ENCODE measurements at regions of chr1 and their contacts with region 1.

Region 1: GRCh38 chr1:34865981-34866761 is 6.6 kb upstream of the SMIM12 start:
- DNase-seq: peak; percentile 77 to 88
- H3K4me3 ChIP-seq: peak overlapping the region; percentile 75 to 87
- H3K27ac ChIP-seq: peak overlapping the region; percentile 70 to 74
- H3K4me1 ChIP-seq: peaks cover 0 to 15% (median 10%) of the 10 kb centered on the region in 4 donors
- H3K27me3 ChIP-seq: peaks cover 0 to under 1% of the 10 kb centered on the region in 2 donors
- CTCF ChIP-seq: peak; percentile 91 to 95

Region 2: DNA sequence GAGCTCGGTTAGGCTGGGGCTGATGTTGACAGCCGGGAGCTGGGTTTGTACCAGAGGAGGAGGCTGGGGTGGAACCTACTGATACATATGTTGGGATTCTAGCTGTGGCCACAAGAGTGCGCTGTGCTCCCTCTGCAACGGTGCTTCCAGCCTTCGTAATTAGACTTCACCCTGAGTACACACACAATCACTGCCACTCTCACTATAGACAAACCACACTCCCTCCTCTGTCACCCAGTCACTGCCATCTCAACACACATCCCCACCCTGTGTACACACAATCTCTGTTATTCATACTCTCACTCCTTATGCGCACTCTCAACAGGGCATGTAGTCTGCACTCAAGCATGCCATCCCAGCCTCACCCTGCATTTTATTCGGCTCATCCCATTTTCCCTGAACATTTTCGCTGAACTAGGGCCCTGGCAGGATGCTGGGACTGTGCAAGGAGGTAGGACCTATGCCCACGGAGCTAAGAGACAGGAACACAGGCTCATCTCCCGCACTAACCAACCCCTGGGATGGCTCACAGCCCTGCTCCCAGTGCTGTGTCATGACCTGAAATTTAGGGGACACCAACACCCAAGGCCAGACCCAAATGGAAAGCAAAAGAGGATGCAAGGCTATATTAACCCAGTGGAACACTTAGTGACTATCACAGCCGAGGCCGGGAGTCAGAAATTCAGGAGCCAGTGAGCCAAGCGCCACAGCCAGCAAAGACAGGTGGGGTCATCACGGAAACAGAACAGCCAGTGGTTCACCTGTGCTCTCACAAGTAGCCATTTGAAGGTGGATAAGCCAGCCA is 79.4 kb before region 1 on chr1:
- intact Hi-C with region 1: loop called (anchors 5 kb)
- DNase-seq: peak; percentile 66 to 86
- H3K4me3 ChIP-seq: no peak overlapping the region
- H3K27ac ChIP-seq: peak overlapping the region; percentile 59 to 93
- H3K4me1 ChIP-seq: peaks cover 0 to 59% (median 41%) of the 10 kb centered on the region in 4 donors
- H3K27me3 ChIP-seq: peaks cover 5 to 14% of the 10 kb centered on the region in 2 donors
- CTCF ChIP-seq: peak; percentile 88 to 89

Region 3: GRCh38 chr1:35180776-35181374 is 314.7 kb after region 1 on chr1:
- intact Hi-C with region 1: loop called (anchors 10 kb)
- DNase-seq: no peak
- H3K4me3 ChIP-seq: no peak overlapping the region
- H3K27ac ChIP-seq: no peak overlapping the region
- H3K4me1 ChIP-seq: peaks cover 0 to 44% (median 19%) of the 10 kb centered on the region in 4 donors
- H3K27me3 ChIP-seq: no peaks in the 10 kb centered on the region
- CTCF ChIP-seq: no peak